Motor neuron (in vitro differentiated cells): ENCODE measurements at regions of chr3 and their contacts with region 1.

Region 1: DNA sequence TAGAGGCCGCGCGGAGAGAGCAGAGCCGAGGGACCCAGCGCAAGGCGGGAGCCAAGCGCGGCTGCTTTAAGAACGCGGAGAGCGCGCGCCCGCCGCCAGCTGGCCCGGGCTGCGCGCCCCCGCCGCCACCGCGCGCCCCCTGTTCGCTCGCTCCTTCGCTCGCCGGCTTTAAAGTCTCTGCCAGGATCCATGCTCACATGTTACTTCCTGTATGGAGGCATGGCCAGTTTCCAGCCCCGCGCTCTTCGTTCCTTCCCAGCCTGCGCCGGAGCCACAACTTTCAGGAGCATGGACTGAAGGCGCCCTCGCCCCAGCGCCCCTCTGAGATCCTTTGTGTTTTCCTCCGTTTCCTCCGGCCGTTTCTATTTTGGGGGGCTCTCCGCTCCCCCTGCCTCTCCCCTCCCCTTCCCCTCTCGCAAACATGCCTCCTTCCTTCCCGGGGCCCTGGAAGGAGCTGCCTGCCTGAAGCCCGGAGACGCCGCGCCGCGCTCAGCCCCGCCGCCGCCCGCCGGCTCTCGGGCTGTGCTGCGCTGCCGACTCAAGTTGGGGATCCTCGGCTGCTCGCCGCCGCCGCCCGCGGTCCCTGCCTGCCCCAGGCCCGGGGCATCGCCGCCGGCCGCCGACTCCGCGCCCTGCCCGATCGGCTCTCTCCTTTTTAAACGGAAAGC is at the start of gene PTPRG:
- ATAC-seq: peak; percentile 48 to 74 (median 67)
- H3K4me3 ChIP-seq: peak within 1 kb of the TSS; percentile 54 to 93 (median 72)
- H3K27ac ChIP-seq: peak within 1 kb of the TSS; percentile 86 to 92
- H3K4me1 ChIP-seq: peaks cover 9 to 16% of the 10 kb centered on the region in 2 donors
- total RNA-seq, gene PTPRG: 15.9 to 75.2 (median 42.9) TPM

Region 2: DNA sequence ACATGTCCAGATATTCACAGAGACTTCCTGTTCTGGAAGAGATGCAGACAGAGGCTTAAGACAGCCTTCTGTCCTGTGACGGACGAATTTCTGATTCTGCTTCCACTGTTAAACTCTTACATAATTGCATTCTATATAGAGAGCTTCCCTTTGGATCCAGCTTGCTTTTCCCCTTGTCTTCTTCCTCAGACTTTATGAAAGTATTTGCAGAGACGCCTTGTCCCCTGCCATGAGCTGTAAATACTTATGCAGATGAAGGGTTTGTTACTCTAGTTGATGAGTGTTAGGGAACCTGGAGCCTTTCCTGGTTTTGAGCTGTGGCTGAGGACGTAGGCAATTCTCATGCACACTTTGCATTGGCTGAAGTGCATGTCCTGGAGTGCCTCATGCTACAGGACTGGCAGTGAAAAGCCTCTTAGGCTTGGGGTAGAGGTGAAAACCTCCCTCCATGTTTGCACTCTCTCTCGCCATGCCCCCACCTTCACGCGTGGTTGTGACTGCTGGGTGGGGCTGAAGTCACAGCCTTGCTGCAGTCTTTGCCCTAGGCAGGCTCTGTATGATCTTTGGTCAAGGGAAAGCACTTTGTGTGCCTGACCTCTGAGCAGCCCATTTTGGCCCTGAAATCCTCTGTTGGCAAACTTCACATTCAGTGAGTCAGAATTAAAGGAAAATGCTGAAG is 286.4 kb after region 1 on chr3:
- in situ Hi-C with region 1: loop called in 1 of 9 experiments (anchors 25 kb)
- ATAC-seq: peak in 6 of 8 experiments; percentile 34 to 94 (median 66)
- H3K4me3 ChIP-seq: no peak overlapping the region
- H3K27ac ChIP-seq: no peak overlapping the region
- H3K4me1 ChIP-seq: peaks cover 0 to 8% of the 10 kb centered on the region in 2 donors

Region 3: GRCh38 chr3:61936344-61936937 is 374.9 kb after region 1 on chr3:
- in situ Hi-C with region 1: loop called in 1 of 9 experiments (anchors 25 kb)
- ATAC-seq: no peak
- H3K4me3 ChIP-seq: no peak overlapping the region
- H3K27ac ChIP-seq: no peak overlapping the region
- H3K4me1 ChIP-seq: peaks cover 0 to 3% of the 10 kb centered on the region in 2 donors

Region 4: GRCh38 chr3:62188681-62189383 is 627.3 kb after region 1 on chr3:
- in situ Hi-C with region 1: loop called in 6 of 9 experiments (anchors 10 to 25 kb)
- ATAC-seq: peak; percentile 75 to 92 (median 86)
- H3K4me3 ChIP-seq: peak overlapping the region in 2 of 5 donors; percentile 18 to 19
- H3K27ac ChIP-seq: no peak overlapping the region
- H3K4me1 ChIP-seq: peaks cover 10 to 16% of the 10 kb centered on the region in 2 donors